OCI-LY7 (cell line): ENCODE measurements at regions of chr3 and their contacts with region 1.

Region 1: DNA sequence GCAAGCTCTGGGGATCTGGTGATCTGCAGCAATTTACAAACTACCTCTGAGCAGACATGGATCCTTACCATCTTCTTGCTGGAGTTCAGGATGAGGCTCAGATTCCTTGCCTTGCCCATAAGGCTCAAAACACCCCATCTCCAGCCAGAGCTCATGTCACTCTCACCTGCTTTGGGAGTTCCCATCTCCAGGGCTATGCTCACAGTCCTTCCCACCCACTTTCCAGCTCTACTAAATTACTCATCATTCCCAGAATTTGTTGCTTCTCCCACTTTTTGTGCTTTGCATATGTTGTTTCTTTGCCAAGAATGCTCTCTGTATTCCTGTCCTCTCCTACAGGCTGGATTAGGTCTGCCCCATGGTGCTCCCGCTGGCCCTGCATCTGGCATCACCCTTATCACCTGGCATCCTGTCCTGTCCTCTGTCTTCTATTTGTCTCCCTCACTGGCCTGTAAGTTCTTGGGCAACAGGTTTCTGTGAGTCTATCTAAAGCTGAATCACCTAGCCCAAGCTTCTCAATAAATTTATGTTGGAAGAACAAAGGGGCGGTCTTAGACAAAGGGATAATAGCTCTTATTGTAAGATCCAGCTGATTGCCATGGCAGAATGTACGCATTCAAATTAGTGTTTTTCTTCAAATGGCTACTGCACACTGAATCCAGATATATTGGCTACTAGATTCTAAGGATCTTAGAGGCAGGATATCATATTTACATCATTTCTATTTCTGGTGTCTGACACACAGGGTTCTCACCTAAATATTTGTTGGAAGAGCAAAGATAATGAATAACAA is 179.2 kb downstream of the CLSTN2 start:
- DNase-seq: no peak
- H3K4me3 ChIP-seq: no peak overlapping the region
- H3K27ac ChIP-seq: no peak overlapping the region
- H3K4me1 ChIP-seq: no peaks in the 10 kb centered on the region
- CTCF ChIP-seq: no peak

Region 2: GRCh38 chr3:139691619-139692018 is 422.6 kb before region 1 on chr3:
- CTCF ChIA-PET with region 1: interaction called, 11 read pairs
- POLR2A ChIA-PET with region 1: no interaction called
- intact Hi-C with region 1: no loop called
- DNase-seq: no peak
- H3K4me3 ChIP-seq: no peak overlapping the region
- H3K27ac ChIP-seq: no peak overlapping the region
- H3K4me1 ChIP-seq: no peaks in the 10 kb centered on the region
- CTCF ChIP-seq: no peak

Region 3: DNA sequence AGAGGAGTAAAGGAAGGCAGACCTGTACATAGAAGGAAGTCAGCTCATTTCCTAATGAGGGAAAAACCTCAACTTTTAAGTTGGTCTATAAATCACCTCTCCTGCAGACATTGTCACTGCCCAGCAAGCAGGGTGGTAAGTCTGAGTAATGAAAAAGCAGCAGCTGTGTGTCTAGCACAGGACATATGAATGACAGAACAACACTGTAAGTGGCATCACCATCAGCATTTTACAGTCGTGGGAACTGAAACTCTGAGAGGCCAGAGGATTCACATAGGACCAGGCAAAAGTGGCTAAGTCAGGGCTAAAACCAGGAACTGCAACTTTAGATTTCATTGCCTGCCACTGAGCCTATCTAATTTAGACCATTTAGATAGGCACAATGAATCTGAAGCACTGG is 56.4 kb after region 1 on chr3:
- CTCF ChIA-PET with region 1: no interaction called
- POLR2A ChIA-PET with region 1: no interaction called
- intact Hi-C with region 1: no loop called
- DNase-seq: no peak
- H3K4me3 ChIP-seq: no peak overlapping the region
- H3K27ac ChIP-seq: no peak overlapping the region
- H3K4me1 ChIP-seq: no peaks in the 10 kb centered on the region
- CTCF ChIP-seq: no peak